Mammary epithelial cell (primary cell): ENCODE measurements at regions of chr22 and their contacts with region 1.

Region 1: DNA sequence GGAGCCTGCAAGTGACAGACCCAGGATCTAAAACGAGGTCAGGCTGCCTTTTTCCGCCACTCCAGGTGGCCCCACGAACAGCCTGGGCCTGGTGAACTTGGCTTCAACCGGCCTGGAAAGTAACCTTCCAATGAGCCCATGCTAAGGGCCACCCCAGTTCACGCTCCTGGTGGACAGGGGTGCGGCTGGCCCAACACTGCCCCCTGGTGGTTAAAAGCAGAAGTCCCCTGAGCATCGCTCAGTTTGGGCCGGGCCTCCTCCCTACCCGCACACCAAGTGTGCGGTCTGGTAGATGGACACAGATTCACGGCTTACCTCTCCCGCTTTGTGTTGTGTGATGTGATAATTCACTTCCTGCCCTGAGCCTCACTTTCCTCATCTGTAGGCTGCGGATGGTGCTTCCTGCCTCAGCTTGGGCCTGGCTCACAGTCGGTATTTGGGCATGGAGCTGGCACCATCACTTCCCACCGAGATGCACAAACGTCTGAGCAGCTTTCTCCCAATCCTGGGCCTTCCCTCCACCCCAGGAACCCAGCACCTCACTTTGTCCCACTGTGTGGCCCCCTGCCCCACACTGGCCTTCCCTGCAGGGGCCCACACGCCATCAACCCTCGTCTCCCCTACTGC is 13.7 kb upstream of the SEC14L3 start:
- DNase-seq: peak; percentile 35
- H3K4me3 ChIP-seq: no peak overlapping the region
- H3K27ac ChIP-seq: no peak overlapping the region
- H3K4me1 ChIP-seq: no peaks in the 10 kb centered on the region
- H3K27me3 ChIP-seq: no peaks in the 10 kb centered on the region
- CTCF ChIP-seq: peak; percentile 83 to 90

Region 2: DNA sequence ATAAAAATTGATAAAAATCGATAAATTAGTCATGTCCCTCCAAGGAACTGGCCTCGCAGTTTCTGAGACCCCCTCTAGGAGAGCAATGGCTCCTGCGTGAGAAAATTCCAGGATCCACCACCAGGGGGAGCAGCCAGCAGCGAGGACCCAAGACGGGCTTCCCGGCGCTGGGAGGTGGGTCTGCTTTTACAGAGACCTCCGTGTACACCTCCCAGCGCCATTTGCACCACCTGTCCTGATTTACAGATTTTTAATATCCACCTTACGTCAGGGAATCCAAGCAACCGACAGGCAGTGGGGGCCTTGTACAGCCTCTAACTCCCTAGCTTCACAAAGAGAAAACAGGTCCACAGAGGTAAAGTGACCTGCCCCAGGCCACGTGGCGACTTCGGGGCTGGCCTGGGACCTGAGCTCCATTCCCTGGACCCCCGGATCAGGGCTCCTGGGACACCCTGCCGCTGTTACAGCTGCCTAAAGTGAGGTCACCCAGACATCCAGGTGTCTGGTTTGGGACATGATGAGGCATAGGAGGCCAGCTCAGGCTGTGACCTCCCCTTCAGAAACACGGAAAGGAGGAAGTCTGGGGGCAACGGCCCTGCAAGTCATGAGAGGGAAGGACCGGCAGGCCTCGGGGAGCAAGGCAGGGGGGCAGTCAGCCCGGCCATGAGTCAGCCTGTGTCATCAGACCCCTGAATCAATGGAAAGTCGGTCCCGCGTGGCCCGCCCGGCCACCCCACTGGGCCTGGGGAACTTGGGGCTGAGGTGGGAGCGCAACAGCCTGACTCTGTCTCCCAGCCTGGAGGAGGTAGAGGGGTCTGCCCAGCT is 222.3 kb before region 1 on chr22:
- CTCF ChIA-PET with region 1: no interaction called
- dilution Hi-C with region 1: no loop called
- in situ Hi-C with region 1: no loop called
- intact Hi-C with region 1: loop called (anchors 2 kb)
- DNase-seq: no peak
- H3K4me3 ChIP-seq: no peak overlapping the region
- H3K27ac ChIP-seq: peak overlapping the region; percentile 62
- H3K4me1 ChIP-seq: peaks cover 15% of the 10 kb centered on the region
- H3K27me3 ChIP-seq: no peaks in the 10 kb centered on the region
- CTCF ChIP-seq: peak; percentile 90 to 96

Region 3: DNA sequence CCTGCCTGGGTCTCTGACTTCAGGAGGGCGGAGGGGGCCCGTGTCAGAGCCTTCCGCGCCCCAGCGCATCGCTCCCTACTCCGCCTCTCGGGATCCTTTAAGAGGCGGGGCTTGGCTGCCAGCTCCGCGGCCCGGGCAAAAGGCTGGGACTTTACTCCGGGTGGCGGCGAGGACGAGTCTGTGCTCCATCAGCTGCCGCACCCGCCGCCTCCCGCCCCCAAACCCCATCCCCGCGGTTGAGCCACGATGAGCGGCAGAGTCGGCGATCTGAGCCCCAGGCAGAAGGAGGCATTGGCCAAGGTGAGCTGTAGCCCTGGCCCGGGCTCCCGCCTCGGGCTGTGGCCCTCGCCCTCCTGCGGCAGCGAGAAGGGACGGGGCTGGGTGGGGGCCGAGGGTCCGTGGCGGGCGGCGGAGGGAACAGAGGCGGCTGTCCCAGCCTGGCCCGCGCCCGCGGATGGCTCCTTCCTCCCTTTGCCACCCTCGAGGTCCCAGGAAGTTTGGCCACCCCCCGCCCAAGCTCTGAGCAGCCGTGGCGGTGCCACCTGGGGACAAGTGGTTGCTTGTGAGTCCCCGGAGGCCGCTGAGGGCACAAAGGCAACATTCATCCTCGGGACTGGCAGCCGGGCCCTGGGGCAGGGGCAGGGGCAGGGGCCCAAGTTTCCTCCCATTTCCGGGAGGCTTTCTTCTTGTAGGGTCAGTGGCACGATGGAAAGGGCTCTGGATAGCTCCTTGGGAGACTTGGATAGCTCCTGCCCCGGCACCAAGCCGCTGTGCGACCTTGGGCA is 88.4 kb before region 1 on chr22 and contains the start of gene SEC14L2:
- CTCF ChIA-PET with region 1: no interaction called
- dilution Hi-C with region 1: no loop called
- in situ Hi-C with region 1: loop called in 1 of 2 experiments (anchors 5 kb)
- intact Hi-C with region 1: loop called (anchors 2 kb)
- DNase-seq: peak; percentile 57
- H3K4me3 ChIP-seq: peak within 1 kb of the TSS; percentile 60 to 94 (median 78)
- H3K27ac ChIP-seq: peak within 1 kb of the TSS; percentile 80
- H3K4me1 ChIP-seq: peaks cover 34% of the 10 kb centered on the region
- H3K27me3 ChIP-seq: no peaks in the 10 kb centered on the region
- CTCF ChIP-seq: no peak
- total RNA-seq, gene SEC14L2: 171 to 266 TPM

Region 4: GRCh38 chr22:30444632-30445437 is 40.6 kb before region 1 on chr22:
- CTCF ChIA-PET with region 1: no interaction called
- dilution Hi-C with region 1: loop called (anchors 5 kb)
- in situ Hi-C with region 1: no loop called
- intact Hi-C with region 1: loop called (anchors 1 kb)
- DNase-seq: peak; percentile 34
- H3K4me3 ChIP-seq: no peak overlapping the region
- H3K27ac ChIP-seq: no peak overlapping the region
- H3K4me1 ChIP-seq: peaks cover 14% of the 10 kb centered on the region
- H3K27me3 ChIP-seq: no peaks in the 10 kb centered on the region
- CTCF ChIP-seq: peak; percentile 74 to 80

Region 5: DNA sequence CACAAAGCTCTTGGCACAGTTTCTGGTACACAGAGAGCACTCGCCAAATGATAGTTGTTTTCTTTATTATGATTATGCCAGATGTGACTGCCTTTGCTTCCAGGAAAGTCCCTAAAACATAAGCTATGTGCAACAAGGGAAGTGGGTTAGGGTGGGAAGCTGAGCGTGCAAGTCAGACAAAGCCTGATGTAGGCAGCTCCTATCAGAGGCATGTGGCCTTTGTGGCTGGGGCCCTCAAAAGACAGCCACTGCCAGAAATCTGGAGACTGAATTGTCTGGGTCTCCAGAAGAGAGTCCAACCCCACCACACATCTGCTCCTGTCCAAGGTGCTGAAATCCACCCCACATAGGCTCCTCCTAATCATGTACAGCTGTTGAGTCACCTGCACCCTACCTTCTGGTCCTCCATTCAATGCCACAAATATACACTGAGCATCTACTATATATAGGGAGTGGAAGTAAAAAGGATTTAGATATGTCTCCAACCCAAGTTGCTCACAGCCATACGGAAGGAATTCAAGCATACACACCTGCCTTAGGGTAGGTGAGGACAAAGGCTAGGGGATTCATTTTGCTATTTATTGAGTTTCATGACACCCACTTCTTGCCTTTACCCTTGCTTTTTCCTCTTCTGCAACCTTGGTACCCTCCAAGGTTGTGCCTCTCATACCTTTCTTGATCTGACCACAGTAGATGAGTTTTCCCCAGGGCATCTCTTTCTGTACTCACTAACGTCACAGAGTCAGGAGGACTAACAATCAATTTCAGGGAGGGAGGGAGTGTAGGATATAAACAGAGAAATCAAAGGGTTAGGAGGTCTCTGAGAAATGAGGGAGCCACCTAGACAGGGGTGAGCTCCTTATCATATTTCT is 26.1 kb before region 1 on chr22:
- CTCF ChIA-PET with region 1: no interaction called
- dilution Hi-C with region 1: no loop called
- in situ Hi-C with region 1: no loop called
- intact Hi-C with region 1: no loop called
- DNase-seq: peak; percentile 31
- H3K4me3 ChIP-seq: no peak overlapping the region
- H3K27ac ChIP-seq: no peak overlapping the region
- H3K4me1 ChIP-seq: no peaks in the 10 kb centered on the region
- H3K27me3 ChIP-seq: no peaks in the 10 kb centered on the region
- CTCF ChIP-seq: no peak

Region 6: GRCh38 chr22:30538280-30538679 is 52.8 kb after region 1 on chr22:
- CTCF ChIA-PET with region 1: no interaction called
- dilution Hi-C with region 1: no loop called
- in situ Hi-C with region 1: no loop called
- intact Hi-C with region 1: no loop called
- DNase-seq: peak; percentile 54
- H3K4me3 ChIP-seq: no peak overlapping the region
- H3K27ac ChIP-seq: no peak overlapping the region
- H3K4me1 ChIP-seq: no peaks in the 10 kb centered on the region
- H3K27me3 ChIP-seq: peaks cover 12% of the 10 kb centered on the region
- CTCF ChIP-seq: no peak

Region 7: DNA sequence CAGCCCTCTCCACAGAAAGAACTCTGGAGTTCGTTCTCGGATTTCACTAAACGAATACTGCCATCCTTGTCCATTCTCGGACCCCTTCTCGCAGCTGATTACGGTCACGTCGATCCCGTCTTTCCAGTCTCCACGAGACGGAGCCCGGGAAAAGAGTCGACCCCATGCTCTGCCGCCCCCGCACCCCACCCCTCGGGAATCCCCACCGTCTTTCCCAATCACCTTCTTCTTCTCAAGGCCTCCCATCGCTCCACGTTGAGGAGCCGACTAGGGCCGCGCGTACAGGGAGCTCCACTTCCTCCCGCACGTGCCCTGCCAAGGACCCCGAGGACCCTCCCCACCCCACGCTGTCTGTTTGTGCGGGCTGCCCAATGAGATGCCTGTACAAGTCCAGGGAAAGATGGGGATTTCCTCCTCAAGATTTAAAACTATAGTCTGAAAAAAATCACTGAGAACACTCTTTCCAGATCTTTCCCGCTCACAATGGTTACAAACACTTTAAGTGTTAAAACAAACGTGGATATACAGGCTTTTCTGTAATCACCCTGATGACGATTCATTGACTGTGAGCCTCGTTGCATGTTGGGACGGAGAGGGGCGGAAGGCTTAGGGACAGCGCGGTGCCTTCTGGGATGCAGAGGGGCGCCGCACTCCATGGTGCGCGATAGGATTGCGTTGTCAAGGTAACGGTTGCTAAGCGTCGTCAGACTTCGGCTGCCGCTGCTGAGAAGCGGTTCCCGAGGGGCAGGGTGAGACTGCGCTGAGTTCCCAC is 106.3 kb after region 1 on chr22 and contains the start of gene PES1:
- CTCF ChIA-PET with region 1: no interaction called
- dilution Hi-C with region 1: no loop called
- in situ Hi-C with region 1: no loop called
- intact Hi-C with region 1: loop called (anchors 5 kb)
- DNase-seq: peak; percentile 96
- H3K4me3 ChIP-seq: peak within 1 kb of the TSS; percentile 65 to 94 (median 84)
- H3K27ac ChIP-seq: peak within 1 kb of the TSS; percentile 97
- H3K4me1 ChIP-seq: peaks cover 11% of the 10 kb centered on the region
- H3K27me3 ChIP-seq: no peaks in the 10 kb centered on the region
- CTCF ChIP-seq: no peak
- total RNA-seq, gene PES1: 52.2 to 99.1 TPM